ENCODE measurements at regions of chr21 and their contacts with region 1.

Region 1: GRCh38 chr21:42145569-42146272 is 73.2 kb upstream of the ABCG1 start:
- DNase-seq: peak; percentile 38 to 84 (median 68)
- ATAC-seq: peak; percentile 90
- H3K4me3 ChIP-seq: no peak overlapping the region
- H3K4me3 Mint-ChIP-seq: no peak overlapping the region
- H3K27ac ChIP-seq: no peak overlapping the region
- H3K27ac Mint-ChIP-seq: peak overlapping the region; percentile 32
- H3K4me1 ChIP-seq: peaks cover 8% of the 10 kb centered on the region
- H3K4me1 Mint-ChIP-seq: peaks cover 9% of the 10 kb centered on the region
- H3K27me3 ChIP-seq: no peaks in the 10 kb centered on the region
- H3K27me3 Mint-ChIP-seq: no peaks in the 10 kb centered on the region
- CTCF ChIP-seq: peak; percentile 80

Region 2: DNA sequence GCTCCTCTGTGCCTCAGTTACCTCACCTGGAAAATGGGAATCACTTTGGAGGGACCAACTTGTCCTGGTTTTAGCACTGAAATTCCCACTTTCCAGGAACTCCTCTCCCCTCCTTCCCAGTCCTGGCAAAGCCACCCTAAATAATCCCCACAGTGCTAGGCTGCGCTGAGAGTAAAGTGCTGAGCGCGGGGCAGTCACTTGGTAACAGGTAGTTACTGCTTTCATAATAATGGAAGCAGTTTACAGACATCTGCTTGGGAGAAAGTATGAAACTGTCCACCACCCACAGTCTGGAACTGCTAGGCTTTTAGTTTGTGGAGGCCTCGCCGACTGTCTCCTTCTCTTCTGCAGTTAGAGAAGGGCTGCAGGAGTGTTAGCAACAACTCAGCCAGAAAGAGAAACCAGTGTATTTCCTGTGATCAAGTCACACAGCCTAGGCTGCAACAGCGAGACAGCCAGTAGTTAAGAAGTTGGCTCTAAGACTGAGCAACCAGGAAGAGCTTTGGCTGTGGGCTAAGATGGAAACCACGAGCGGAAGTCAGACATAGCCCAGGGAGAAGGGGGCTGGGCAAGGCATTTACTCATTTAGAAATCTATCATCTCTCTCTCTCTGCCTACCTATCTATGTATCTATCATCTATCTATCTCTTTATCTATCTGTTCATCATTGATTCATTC is 42.4 kb after region 1 on chr21:
- CTCF ChIA-PET with region 1: interaction called, 14 read pairs
- POLR2A ChIA-PET with region 1: no interaction called
- intact Hi-C with region 1: no loop called
- DNase-seq: peak; percentile 58 to 95 (median 80)
- ATAC-seq: peak; percentile 85
- H3K4me3 ChIP-seq: peak overlapping the region; percentile 11 to 22
- H3K4me3 Mint-ChIP-seq: peak overlapping the region; percentile 74
- H3K27ac ChIP-seq: peak overlapping the region; percentile 63 to 85
- H3K27ac Mint-ChIP-seq: peak overlapping the region; percentile 97
- H3K4me1 ChIP-seq: peaks cover 86% of the 10 kb centered on the region
- H3K4me1 Mint-ChIP-seq: peaks cover 77% of the 10 kb centered on the region
- H3K27me3 ChIP-seq: no peaks in the 10 kb centered on the region
- H3K27me3 Mint-ChIP-seq: no peaks in the 10 kb centered on the region
- CTCF ChIP-seq: no peak

Region 3: GRCh38 chr21:42233067-42233961 is 87.6 kb after region 1 on chr21:
- CTCF ChIA-PET with region 1: interaction called, 33 read pairs
- POLR2A ChIA-PET with region 1: interaction called, 9 read pairs
- intact Hi-C with region 1: loop called in 1 of 2 experiments (anchors 5 kb)
- DNase-seq: peak; percentile 49 to 95 (median 72)
- ATAC-seq: peak; percentile 57
- H3K4me3 ChIP-seq: peak overlapping the region in 1 of 2 experiments; percentile 1
- H3K4me3 Mint-ChIP-seq: peak overlapping the region; percentile 70
- H3K27ac ChIP-seq: peak overlapping the region; percentile 69 to 93
- H3K27ac Mint-ChIP-seq: peak overlapping the region; percentile 95
- H3K4me1 ChIP-seq: peaks cover 80% of the 10 kb centered on the region
- H3K4me1 Mint-ChIP-seq: peaks cover 94% of the 10 kb centered on the region
- H3K27me3 ChIP-seq: no peaks in the 10 kb centered on the region
- H3K27me3 Mint-ChIP-seq: no peaks in the 10 kb centered on the region
- CTCF ChIP-seq: peak; percentile 50

Region 4: GRCh38 chr21:42258153-42258884 is 112.6 kb after region 1 on chr21:
- CTCF ChIA-PET with region 1: interaction called, 140 read pairs
- POLR2A ChIA-PET with region 1: interaction called, 4 read pairs
- intact Hi-C with region 1: loop called in 1 of 2 experiments (anchors 1 kb)
- DNase-seq: peak; percentile 70 to 89 (median 84)
- ATAC-seq: peak; percentile 95
- H3K4me3 ChIP-seq: no peak overlapping the region
- H3K4me3 Mint-ChIP-seq: no peak overlapping the region
- H3K27ac ChIP-seq: no peak overlapping the region
- H3K27ac Mint-ChIP-seq: peak overlapping the region; percentile 42
- H3K4me1 ChIP-seq: peaks cover 14% of the 10 kb centered on the region
- H3K4me1 Mint-ChIP-seq: peaks cover 33% of the 10 kb centered on the region
- H3K27me3 ChIP-seq: no peaks in the 10 kb centered on the region
- H3K27me3 Mint-ChIP-seq: no peaks in the 10 kb centered on the region
- CTCF ChIP-seq: peak; percentile 93

Region 5: GRCh38 chr21:42449296-42449927 is 303.7 kb after region 1 on chr21:
- CTCF ChIA-PET with region 1: interaction called, 10 read pairs
- POLR2A ChIA-PET with region 1: no interaction called
- intact Hi-C with region 1: loop called in 1 of 2 experiments (anchors 5 kb)
- DNase-seq: no peak
- ATAC-seq: no peak
- H3K4me3 ChIP-seq: no peak overlapping the region
- H3K4me3 Mint-ChIP-seq: no peak overlapping the region
- H3K27ac ChIP-seq: peak overlapping the region; percentile 0 to 5
- H3K27ac Mint-ChIP-seq: peak overlapping the region; percentile 98
- H3K4me1 ChIP-seq: peaks cover 15% of the 10 kb centered on the region
- H3K4me1 Mint-ChIP-seq: peaks cover 24% of the 10 kb centered on the region
- H3K27me3 ChIP-seq: no peaks in the 10 kb centered on the region
- H3K27me3 Mint-ChIP-seq: no peaks in the 10 kb centered on the region
- CTCF ChIP-seq: no peak